ENCODE measurements at regions of chr3 and their contacts with region 1.

Region 1: GRCh38 chr3:42652611-42653302 is 740 bp upstream of the ZBTB47 start:
- DNase-seq: no peak
- H3K4me3 Mint-ChIP-seq: peak overlapping the region; percentile 41
- H3K27ac Mint-ChIP-seq: peak overlapping the region; percentile 48
- H3K4me1 Mint-ChIP-seq: peaks cover 23% of the 10 kb centered on the region
- H3K27me3 Mint-ChIP-seq: peaks cover 2% of the 10 kb centered on the region

Region 2: GRCh38 chr3:42640771-42641370 is 11.9 kb before region 1 on chr3:
- CTCF ChIA-PET with region 1: interaction called, 12 read pairs
- POLR2A ChIA-PET with region 1: no interaction called
- DNase-seq: no peak
- H3K4me3 Mint-ChIP-seq: no peak overlapping the region
- H3K27ac Mint-ChIP-seq: peak overlapping the region; percentile 77
- H3K4me1 Mint-ChIP-seq: peaks cover 9% of the 10 kb centered on the region
- H3K27me3 Mint-ChIP-seq: no peaks in the 10 kb centered on the region

Region 3: DNA sequence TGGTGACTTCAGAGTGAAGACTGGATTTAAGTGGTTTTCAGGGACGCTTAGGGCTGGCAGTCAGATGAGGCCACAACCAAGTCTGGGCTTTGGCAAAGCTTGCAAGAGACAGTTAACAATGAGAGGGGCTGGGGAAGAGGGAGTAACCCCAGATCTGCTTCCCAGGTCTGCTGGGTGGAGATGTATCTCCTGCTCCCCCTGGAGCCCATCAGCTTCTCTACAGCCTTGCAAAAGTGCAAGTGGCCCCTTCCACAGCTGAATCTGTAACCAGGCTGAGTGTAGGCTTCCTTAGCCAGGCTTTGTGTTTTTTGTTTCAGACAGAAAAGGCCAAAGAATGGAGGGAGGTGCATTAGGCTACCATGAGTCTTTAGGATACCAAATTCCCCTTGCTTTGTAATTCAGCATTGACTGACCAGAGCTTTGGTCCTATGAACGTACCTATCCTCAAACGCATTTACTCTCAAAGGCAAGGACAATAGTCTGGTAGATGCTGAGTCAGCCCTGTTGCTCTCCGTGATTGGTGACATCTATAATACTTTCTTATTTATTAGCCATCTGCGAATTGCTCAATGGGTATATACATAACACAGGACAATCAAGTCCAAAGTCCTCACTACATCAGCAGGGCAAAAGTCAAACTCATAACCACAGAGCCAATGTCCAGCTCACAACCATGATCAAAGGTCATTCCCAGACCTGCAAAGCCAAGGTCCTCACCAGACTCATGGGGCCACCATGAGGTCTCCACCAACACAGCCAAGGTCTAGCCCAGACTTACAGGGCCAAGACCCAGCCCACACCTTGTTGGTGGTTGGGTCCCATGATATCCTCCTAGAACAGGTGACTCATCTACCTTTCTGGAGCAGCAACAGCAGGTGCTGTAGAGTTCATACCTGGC is 103.2 kb after region 1 on chr3:
- CTCF ChIA-PET with region 1: no interaction called
- POLR2A ChIA-PET with region 1: no interaction called
- DNase-seq: peak; percentile 44
- H3K4me3 Mint-ChIP-seq: no peak overlapping the region
- H3K27ac Mint-ChIP-seq: no peak overlapping the region
- H3K4me1 Mint-ChIP-seq: peaks cover 6% of the 10 kb centered on the region
- H3K27me3 Mint-ChIP-seq: peaks cover 9% of the 10 kb centered on the region